ENCODE measurements at regions of chr2 and their contacts with region 1.

Region 1: GRCh38 chr2:28729698-28730097 is 21.9 kb upstream of the PPP1CB start:
- DNase-seq: no peak
- H3K4me3 ChIP-seq: no peak overlapping the region
- H3K4me3 Mint-ChIP-seq: no peak overlapping the region
- H3K27ac ChIP-seq: no peak overlapping the region
- H3K27ac Mint-ChIP-seq: no peak overlapping the region
- H3K4me1 ChIP-seq: no peaks in the 10 kb centered on the region
- H3K4me1 Mint-ChIP-seq: peaks cover 0 to 5% (median 2%) of the 10 kb centered on the region in 4 donors
- H3K27me3 ChIP-seq: no peaks in the 10 kb centered on the region
- H3K27me3 Mint-ChIP-seq: no peaks in the 10 kb centered on the region

Region 2: DNA sequence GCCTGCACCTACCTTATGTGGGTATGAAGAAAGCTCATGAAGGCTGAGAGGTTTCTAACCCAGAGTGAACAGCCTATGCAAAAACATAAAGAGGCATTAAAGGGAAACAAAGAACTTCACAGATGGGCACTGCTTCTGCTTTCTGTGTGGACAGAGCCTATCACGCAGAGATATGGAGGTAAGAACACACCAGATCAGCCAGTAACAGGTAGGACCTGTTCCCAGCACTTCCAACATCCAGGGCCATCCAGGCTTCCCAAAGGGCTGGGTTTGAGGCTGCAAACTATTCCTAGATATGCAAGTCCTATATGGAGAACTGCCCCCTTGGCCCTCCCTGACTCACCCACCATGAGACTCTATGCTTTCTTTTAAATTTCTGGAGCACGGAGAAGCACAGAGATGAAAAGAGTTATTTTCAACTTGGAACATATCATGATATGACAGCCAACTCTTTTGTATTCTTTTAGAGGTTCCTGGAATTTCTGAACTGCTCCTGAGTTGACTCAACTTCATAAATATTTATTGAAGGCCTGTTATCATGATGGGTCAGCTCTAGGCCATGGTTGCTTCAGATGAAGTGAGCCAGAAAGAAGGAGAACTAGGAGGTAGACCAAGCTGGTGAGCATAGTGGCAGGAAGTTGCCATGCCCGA is 55.5 kb before region 1 on chr2:
- CTCF ChIA-PET with region 1: no interaction called
- POLR2A ChIA-PET with region 1: no interaction called
- intact Hi-C with region 1: loop called (anchors 10 kb)
- DNase-seq: no peak
- H3K4me3 ChIP-seq: no peak overlapping the region
- H3K4me3 Mint-ChIP-seq: no peak overlapping the region
- H3K27ac ChIP-seq: no peak overlapping the region
- H3K27ac Mint-ChIP-seq: peak overlapping the region in 1 of 7 donors; percentile 42
- H3K4me1 ChIP-seq: no peaks in the 10 kb centered on the region
- H3K4me1 Mint-ChIP-seq: peaks cover 0 to 4% (median 1%) of the 10 kb centered on the region in 4 donors
- H3K27me3 ChIP-seq: no peaks in the 10 kb centered on the region
- H3K27me3 Mint-ChIP-seq: no peaks in the 10 kb centered on the region

Region 3: DNA sequence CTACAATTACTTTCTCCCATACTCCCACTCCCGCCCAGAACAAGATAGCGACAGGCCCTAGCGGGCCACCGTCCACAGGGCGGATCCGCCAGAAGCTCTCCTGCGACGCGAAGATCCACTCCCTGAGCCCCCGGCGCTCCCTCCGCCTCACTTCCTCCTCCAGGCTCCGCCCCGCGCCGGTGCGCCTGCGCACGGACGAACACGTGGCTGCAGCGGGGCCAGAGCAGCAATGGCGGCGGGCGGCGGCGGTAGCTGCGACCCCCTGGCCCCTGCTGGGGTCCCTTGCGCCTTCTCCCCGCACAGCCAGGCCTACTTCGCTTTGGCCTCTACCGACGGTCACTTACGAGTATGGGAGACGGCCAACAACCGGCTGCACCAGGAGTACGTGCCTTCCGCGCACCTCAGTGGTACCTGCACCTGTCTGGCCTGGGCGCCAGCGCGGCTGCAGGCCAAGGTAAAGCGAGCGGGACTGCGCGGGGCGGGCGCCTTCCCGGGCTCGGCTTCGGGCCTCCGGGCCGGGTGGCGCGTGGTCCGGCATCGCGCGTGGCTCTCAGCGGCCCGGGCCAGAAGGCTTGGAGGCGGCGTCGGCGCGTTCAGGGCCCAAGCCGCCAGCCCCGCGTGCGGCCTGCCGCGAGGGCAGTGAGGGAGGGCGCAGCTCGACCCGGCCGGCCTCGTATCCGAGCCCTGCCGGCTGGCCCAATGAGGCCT is 164.9 kb after region 1 on chr2 and contains the start of gene WDR43:
- CTCF ChIA-PET with region 1: no interaction called
- POLR2A ChIA-PET with region 1: no interaction called
- intact Hi-C with region 1: no loop called
- DNase-seq: peak; percentile 97 to 99 (median 98)
- H3K4me3 ChIP-seq: peak within 1 kb of the TSS; percentile 75 to 91
- H3K4me3 Mint-ChIP-seq: peak within 1 kb of the TSS; percentile 91 to 100 (median 96)
- H3K27ac ChIP-seq: peak within 1 kb of the TSS; percentile 83
- H3K27ac Mint-ChIP-seq: peak within 1 kb of the TSS; percentile 88 to 99 (median 95)
- H3K4me1 ChIP-seq: peaks cover 43% of the 10 kb centered on the region
- H3K4me1 Mint-ChIP-seq: peaks cover 33 to 50% (median 40%) of the 10 kb centered on the region in 4 donors
- H3K27me3 ChIP-seq: no peaks in the 10 kb centered on the region
- H3K27me3 Mint-ChIP-seq: peaks cover 0 to 2% of the 10 kb centered on the region in 2 donors
- total RNA-seq, gene WDR43: 52.9 to 57.5 TPM